Left colon (tissue), 2 donors: ENCODE measurements at regions of chr16 and their contacts with region 1.

Region 1: DNA sequence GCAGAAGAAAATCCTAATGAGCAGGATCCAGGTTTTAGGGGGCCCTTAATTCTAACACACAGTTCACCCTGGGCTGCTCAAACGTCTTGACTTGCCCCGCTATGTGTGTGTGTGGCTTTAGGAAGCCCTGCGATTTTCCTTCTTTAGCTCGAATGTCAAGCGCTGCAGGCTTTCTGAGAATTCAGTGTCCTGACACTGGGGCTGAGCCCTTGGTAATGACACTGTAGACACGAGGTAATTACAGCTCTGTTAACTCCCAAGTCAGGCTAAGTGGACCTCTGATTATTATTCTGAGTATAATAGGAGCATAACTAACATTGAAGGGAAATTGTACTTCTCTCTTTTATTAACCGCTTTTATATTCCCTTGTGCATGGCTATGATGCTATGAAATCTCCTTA is 202.1 kb downstream of the RBFOX1 start:
- DNase-seq: no peak
- ATAC-seq: no peak

Region 2: DNA sequence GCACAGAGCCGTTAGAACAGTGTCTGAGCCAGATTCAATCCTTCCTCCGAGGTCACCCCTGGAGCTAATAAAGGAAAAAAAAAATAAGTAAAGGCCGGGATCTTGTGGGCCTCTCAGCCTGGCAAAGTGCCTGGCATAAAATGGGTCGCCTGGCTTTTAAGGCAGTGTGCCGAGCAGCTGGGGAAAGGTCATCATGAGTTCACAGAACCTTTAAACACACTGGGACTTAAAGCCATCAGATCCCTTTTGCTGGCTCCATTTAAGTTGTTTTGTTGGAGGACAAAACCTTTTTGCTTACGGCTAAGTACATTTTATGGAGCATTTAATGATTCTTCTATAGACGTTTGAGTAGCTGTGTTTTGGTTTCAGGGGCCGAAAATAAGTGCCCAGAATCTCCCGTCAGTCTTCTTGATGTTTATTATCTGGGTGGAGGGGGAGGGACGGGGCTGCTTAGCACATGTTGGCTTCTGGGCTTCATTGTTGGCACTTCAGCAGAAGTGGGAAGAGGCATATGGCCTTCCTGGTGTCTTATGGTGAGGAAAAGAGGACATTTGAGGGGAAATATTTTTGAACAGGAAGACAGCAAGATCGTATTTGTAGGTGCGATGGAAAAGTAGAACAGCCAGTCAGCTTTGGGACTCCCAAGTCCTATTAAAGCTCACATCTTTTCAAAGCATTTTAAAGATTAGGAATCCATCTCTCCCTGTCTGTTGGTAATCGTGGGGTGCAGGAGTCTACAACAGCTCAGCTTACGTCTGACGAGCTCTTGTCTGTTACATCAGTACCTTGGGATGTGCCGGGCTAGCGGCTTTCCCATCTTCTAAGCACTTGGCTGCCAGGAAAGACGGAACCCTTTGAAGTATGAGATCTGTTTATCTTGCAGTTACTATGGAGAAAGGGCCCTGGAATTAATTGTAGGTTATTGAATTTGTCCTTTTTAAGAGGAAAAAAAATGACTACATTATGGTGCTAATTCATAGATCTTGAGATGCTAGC is 171.0 kb before region 1 on chr16:
- intact Hi-C with region 1: no loop called
- DNase-seq: no peak
- ATAC-seq: no peak

Region 3: GRCh38 chr16:7597677-7598076 is 62.9 kb after region 1 on chr16:
- intact Hi-C with region 1: loop called in 1 of 2 experiments (anchors 10 kb)
- DNase-seq: no peak
- ATAC-seq: no peak